Activated CD4-positive, alpha-beta T cell treated with anti-CD3 and anti-CD28 coated beads for 36 hours (primary cell): ENCODE measurements at regions of chr17 and their contacts with region 1.

Region 1: DNA sequence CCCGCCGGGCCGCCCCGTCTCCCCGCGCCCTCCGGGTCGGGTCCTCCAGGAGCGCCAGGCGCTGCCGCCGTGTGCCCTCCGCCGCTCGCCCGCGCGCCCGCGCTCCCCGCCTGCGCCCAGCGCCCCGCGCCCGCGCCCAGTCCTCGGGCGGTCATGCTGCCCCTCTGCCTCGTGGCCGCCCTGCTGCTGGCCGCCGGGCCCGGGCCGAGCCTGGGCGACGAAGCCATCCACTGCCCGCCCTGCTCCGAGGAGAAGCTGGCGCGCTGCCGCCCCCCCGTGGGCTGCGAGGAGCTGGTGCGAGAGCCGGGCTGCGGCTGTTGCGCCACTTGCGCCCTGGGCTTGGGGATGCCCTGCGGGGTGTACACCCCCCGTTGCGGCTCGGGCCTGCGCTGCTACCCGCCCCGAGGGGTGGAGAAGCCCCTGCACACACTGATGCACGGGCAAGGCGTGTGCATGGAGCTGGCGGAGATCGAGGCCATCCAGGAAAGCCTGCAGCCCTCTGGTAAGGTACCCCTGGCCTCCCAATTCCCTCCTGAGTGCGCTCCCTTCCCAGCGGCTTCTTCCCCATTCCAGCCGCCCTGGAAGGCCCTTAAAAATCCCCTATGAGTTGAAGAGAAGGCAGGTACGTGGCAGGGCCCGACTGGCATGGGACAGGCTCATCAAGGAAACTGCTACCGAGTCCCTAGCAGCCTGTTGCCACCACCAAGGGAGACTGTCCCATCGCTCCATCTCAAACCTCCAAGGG is 505 bp downstream of the IGFBP4 start:
- DNase-seq: peak; percentile 83
- ATAC-seq: peak; percentile 68
- H3K4me3 Mint-ChIP-seq: peak overlapping the region; percentile 70
- H3K27ac Mint-ChIP-seq: peak overlapping the region; percentile 88
- H3K4me1 Mint-ChIP-seq: peaks cover 45% of the 10 kb centered on the region
- H3K27me3 Mint-ChIP-seq: peaks cover 5% of the 10 kb centered on the region

Region 2: DNA sequence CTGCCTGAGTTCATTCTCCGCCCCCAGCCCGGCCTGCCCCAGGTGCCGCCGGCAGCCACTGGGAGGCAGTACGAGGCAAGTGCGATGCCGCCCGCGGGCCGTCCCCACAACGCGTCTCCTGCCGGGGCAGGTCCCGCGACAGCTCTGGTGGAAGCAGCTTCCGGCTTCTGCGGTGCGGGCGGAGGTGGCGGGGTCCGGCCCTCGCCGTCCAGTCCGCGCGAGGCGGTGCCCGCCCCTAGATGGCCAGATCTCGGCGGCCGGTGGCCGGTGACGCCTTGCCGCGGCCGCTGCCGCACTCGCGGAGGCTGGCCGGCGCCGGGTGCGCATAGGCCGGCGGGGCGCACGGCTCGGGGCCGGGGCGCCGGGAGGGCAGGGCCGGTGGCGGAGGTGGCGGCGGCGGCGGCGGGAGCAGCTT is 81.1 kb before region 1 on chr17:
- CTCF ChIA-PET with region 1: interaction called, 4 read pairs
- POLR2A ChIA-PET with region 1: no interaction called
- intact Hi-C with region 1: loop called in 1 of 2 experiments (anchors 1 kb)
- DNase-seq: peak; percentile 95
- ATAC-seq: peak; percentile 91
- H3K4me3 Mint-ChIP-seq: peak overlapping the region; percentile 67
- H3K27ac Mint-ChIP-seq: no peak overlapping the region
- H3K4me1 Mint-ChIP-seq: peaks cover 20% of the 10 kb centered on the region
- H3K27me3 Mint-ChIP-seq: peaks cover 10% of the 10 kb centered on the region

Region 3: DNA sequence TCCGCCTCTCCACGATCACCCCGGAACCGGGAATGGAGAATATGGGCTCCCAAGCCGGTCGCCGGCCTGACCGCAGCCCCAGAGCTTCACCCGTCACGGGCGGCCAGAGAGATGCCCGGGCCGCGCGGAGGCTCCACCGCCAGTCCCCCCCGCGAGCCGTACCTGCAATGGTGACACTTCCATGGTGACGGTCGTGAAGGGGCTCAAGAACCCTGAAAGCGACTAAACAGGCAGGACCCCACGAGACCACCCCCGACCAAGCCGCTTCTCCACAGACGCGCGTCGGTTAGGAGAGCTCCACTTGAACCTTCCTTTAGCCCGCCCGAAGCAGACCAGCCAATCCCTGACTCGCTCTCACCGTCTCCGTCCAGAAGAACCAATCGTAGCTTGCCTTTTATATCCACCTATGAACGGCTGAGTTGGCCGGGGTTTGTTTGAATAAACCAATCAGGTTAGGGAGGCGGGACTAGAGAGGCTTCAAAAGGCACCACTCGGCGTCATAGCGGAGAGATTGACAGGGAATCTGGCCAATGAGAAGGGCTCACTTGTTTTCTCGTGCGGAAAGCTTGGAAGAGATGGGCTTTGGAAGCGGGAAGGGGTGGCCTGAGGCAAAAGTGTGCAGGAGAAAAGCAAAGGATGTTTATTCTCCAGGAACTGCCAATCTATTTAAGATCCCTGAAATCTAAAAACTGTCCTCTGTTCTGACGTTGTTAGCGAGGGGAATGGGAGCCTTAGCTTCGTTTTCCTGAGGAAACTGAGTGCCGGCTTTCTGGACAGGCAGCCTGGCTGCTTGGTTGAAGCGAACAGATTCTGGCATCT is 25.9 kb before region 1 on chr17 and contains the start of gene TOP2A:
- CTCF ChIA-PET with region 1: interaction called, 12 read pairs
- POLR2A ChIA-PET with region 1: interaction called, 3 read pairs
- intact Hi-C with region 1: loop called in 1 of 2 experiments (anchors 1 kb)
- DNase-seq: peak; percentile 95
- ATAC-seq: peak; percentile 99
- H3K4me3 Mint-ChIP-seq: peak within 1 kb of the TSS; percentile 86
- H3K27ac Mint-ChIP-seq: peak within 1 kb of the TSS; percentile 89
- H3K4me1 Mint-ChIP-seq: peaks cover 24% of the 10 kb centered on the region
- H3K27me3 Mint-ChIP-seq: no peaks in the 10 kb centered on the region
- total RNA-seq, gene TOP2A: 245 to 322 TPM

Region 4: DNA sequence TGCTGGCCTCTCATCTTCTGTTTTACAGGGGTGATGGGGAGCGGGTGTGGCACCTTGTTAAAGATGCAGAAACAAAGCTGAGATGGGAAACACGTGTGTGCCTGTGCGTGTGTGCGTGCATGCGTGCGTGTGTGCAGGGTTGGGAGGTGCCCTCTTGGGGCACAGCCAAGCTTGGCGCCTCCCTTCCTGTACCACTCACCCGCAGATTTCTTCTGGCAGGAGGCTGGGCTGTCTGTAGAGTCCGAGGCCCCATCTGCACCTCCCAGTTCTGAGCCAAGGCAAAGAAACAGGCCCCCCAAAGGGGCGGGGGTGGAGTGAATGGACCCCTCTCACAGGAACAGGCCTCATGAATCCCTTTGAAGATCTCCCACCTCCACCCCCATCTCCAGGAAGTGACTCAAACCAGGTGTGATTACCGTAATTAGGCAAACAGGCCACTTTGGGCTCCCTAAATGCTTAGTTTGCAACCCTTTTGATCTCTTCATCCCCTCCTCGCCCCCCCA is 36.8 kb after region 1 on chr17:
- CTCF ChIA-PET with region 1: interaction called, 3 read pairs
- POLR2A ChIA-PET with region 1: interaction called, 5 read pairs
- intact Hi-C with region 1: loop called (anchors 1 to 5 kb)
- DNase-seq: peak; percentile 95
- ATAC-seq: peak; percentile 94
- H3K4me3 Mint-ChIP-seq: peak overlapping the region; percentile 60
- H3K27ac Mint-ChIP-seq: peak overlapping the region; percentile 96
- H3K4me1 Mint-ChIP-seq: peaks cover 70% of the 10 kb centered on the region
- H3K27me3 Mint-ChIP-seq: no peaks in the 10 kb centered on the region

Region 5: DNA sequence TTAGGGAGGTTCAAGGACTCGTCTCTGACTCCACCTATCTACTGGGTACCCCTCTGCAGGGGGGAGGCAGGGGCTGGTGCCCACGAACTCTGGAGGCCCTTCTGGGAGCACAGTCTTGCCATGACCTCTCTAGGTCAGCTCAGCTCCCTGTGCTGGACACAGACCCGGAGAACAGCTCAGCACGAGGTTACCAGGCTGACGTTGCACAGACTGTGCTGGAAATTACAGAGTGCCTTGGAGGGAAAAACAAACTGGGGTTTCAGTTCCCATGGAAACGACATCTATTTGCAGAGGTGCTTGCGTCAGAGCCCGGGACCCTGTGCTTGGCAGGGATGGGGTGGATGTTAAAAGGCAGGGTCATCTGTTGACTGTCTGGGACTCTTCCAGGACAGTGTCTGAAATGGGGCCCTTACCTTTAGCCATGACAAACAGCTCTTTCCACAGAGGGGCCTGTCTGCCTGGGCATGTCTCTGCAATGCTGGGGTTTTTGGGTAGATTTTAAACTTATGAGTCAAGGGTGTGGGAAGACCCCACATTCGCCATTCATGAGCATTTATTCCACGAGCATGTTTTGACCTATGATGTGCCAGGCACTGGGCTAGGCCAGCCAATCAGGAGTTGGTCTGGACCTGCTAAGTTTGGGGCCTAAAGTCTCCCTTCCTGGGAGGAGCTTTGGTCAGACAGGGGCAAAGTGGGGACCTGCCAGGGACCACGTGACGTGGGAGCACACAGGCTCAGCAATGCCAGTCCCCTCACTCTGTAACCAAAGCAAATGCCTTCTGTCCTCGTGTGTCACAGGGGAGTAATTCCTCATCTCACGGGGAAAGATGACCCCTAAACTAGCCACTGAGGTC is 99.0 kb after region 1 on chr17:
- CTCF ChIA-PET with region 1: interaction called, 4 read pairs
- POLR2A ChIA-PET with region 1: interaction called, 7 read pairs
- intact Hi-C with region 1: loop called in 1 of 2 experiments (anchors 2 kb)
- DNase-seq: peak; percentile 76
- ATAC-seq: peak; percentile 52
- H3K4me3 Mint-ChIP-seq: peak overlapping the region; percentile 63
- H3K27ac Mint-ChIP-seq: peak overlapping the region; percentile 98
- H3K4me1 Mint-ChIP-seq: peaks cover 88% of the 10 kb centered on the region
- H3K27me3 Mint-ChIP-seq: no peaks in the 10 kb centered on the region